ENCODE measurements at regions of chr16 and their contacts with region 1.

Region 1: GRCh38 chr16:73043828-73044470 is 4.0 kb downstream of the ZFHX3 start:
- DNase-seq: no peak
- H3K4me3 ChIP-seq: peak overlapping the region in 2 of 4 donors; percentile 3 to 11
- H3K27ac ChIP-seq: peak overlapping the region; percentile 65 to 96 (median 93)
- H3K4me1 ChIP-seq: peaks cover 49 to 93% (median 68%) of the 10 kb centered on the region in 4 donors
- H3K27me3 ChIP-seq: no peaks in the 10 kb centered on the region
- CTCF ChIP-seq: no peak
- EP300 ChIP-seq: no peak
- POLR2A ChIP-seq: no peak

Region 2: DNA sequence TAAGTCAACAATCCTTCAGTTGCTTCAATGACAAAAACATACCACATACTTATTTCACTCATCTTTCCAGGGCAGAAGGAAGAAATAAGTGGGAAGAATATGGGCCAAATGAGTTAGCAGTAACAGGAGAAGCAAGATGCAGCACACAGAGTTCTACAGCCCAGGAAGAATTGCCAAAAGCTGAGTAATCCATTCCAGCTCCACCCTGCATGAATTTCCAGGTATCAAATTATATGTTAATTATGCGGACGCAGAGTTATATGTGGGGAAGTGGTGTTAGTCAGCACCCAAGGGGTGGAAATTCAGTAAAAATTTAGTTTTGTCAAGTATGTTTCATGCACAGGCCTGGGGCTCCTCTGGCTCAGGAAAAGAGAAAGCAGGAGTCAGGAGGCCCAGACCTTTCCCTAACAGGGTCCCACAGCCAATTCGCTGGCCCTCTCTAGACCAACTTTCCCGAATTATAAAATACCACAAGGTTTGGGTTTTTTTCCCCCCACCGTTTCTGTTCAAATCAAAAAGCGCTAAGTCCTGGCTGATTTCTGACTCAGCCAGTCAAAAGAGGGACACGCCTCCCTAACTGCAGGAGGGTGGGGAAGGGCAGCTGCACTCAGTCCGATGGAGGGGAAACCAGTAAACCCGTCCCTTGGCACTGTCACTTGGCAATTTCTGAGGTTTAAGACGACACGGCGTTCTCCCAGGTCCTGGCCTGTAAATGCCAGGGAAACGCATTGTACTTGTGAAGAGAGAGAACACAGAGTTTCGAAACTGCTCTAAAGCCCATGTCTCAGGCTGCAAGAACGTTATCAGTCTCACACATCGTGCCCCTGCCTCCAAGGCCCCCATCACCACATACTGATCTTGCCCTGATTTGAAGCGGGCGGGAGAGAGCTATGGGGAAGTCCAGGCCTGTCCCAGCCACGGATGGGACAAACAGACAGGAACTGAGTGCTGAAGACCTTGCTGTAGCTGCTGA is 54.1 kb before region 1 on chr16:
- intact Hi-C with region 1: loop called (anchors 5 kb)
- DNase-seq: peak; percentile 95
- H3K4me3 ChIP-seq: peak overlapping the region; percentile 1 to 27 (median 18)
- H3K27ac ChIP-seq: peak overlapping the region; percentile 76 to 81 (median 78)
- H3K4me1 ChIP-seq: peaks cover 61 to 97% (median 89%) of the 10 kb centered on the region in 4 donors
- H3K27me3 ChIP-seq: no peaks in the 10 kb centered on the region
- CTCF ChIP-seq: no peak
- EP300 ChIP-seq: peak; percentile 69
- POLR2A ChIP-seq: no peak